B cell (primary cell): ENCODE measurements at regions of chr12 and their contacts with region 1.

Region 1: DNA sequence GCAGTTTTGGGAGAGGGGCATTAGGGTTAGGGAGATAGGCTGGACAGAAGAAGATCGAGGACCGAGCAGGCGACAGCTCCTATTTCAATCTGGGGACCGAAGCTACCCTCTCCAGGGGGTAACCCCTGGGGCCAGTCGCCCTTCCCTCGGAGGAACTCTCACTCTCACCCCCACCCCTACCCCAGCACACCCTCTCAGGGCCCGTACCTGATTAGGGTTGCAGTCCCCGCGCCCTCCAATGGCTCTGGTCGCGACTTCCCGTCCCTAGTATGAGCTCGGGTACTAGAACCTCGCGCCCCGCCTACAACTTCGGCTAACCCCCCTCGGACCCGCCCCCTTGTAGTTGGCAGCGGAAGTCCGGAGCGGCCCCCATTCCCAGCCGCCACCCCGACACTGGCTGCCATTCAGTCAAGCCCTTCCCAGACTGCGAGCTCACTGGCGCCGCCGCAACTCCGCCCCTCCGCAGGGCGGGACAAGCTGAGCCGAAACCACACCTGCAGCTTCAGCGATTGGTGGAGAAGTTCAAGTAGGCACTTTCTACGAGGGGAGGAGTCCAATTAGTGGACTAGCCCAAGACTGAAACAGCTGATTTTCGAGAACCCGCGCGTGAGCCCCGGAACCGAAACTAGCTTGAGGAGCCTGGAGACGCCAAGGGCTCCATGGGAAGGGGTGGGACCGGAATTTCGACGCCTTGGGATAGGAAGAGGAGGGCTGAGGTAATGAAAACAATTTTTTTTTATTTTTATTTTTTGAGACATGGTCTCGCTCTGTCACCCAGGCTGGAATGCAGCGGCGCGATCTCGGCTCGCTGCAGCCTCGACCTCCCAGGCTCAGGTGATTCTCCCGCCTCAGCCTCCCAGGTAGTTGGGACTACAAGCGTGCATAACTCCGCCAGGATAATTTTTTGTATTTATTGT is at the start of gene STAT2:
- DNase-seq: peak; percentile 99
- ATAC-seq: peak; percentile 93
- H3K4me3 ChIP-seq: peak within 1 kb of the TSS; percentile 55 to 97 (median 76)
- H3K4me3 Mint-ChIP-seq: peak within 1 kb of the TSS; percentile 89
- H3K27ac ChIP-seq: peak within 1 kb of the TSS; percentile 37 to 72
- H3K27ac Mint-ChIP-seq: peak within 1 kb of the TSS; percentile 92
- H3K4me1 ChIP-seq: peaks cover 15 to 24% of the 10 kb centered on the region in 2 donors
- H3K4me1 Mint-ChIP-seq: peaks cover 29% of the 10 kb centered on the region
- H3K27me3 ChIP-seq: no peaks in the 10 kb centered on the region
- H3K27me3 Mint-ChIP-seq: no peaks in the 10 kb centered on the region
- CTCF ChIP-seq: no peak
- total RNA-seq, gene STAT2: 298 and 309 TPM in 2 replicates

Region 2: DNA sequence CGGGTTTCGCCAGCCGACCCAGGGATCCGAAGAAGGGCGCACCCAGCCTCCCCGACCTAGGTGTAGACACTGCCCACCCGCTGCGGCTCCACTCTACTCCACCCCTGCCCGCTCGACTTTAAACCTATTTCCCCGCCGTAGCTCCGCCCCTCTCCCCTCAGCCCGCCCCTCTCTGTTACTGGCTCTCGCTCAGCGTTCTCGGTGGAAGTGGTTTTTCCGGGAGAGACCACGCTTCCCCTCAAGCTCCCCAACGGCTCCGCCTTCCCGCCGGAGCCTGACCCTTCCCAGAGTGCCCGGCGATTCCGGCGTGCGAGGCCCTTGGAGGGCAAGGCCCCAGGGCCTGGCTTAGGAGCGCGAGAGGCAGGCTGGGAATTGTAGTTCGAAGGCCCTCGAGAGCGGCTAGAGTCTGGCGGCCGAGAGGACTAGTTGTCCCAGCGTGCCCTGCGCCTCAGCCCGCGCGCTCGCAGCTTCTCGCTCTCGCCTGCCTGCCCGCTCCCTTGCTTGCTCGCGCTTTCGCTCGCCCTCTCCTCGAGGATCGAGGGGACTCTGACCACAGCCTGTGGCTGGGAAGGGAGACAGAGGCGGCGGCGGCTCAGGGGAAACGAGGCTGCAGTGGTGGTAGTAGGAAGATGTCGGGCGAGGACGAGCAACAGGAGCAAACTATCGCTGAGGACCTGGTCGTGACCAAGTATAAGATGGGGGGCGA is 255.8 kb before region 1 on chr12 and contains the start of gene PA2G4:
- CTCF ChIA-PET with region 1: no interaction called
- POLR2A ChIA-PET with region 1: no interaction called
- intact Hi-C with region 1: loop called (anchors 1 kb)
- DNase-seq: peak; percentile 95
- ATAC-seq: peak; percentile 89
- H3K4me3 ChIP-seq: peak within 1 kb of the TSS; percentile 56 to 93 (median 86)
- H3K4me3 Mint-ChIP-seq: peak within 1 kb of the TSS; percentile 100
- H3K27ac ChIP-seq: peak within 1 kb of the TSS; percentile 66 to 67
- H3K27ac Mint-ChIP-seq: peak within 1 kb of the TSS; percentile 92
- H3K4me1 ChIP-seq: peaks cover 18 to 23% of the 10 kb centered on the region in 2 donors
- H3K4me1 Mint-ChIP-seq: peaks cover 38% of the 10 kb centered on the region
- H3K27me3 ChIP-seq: no peaks in the 10 kb centered on the region
- H3K27me3 Mint-ChIP-seq: no peaks in the 10 kb centered on the region
- CTCF ChIP-seq: no peak
- total RNA-seq, gene PA2G4: 77.3 and 84.6 TPM in 2 replicates

Region 3: DNA sequence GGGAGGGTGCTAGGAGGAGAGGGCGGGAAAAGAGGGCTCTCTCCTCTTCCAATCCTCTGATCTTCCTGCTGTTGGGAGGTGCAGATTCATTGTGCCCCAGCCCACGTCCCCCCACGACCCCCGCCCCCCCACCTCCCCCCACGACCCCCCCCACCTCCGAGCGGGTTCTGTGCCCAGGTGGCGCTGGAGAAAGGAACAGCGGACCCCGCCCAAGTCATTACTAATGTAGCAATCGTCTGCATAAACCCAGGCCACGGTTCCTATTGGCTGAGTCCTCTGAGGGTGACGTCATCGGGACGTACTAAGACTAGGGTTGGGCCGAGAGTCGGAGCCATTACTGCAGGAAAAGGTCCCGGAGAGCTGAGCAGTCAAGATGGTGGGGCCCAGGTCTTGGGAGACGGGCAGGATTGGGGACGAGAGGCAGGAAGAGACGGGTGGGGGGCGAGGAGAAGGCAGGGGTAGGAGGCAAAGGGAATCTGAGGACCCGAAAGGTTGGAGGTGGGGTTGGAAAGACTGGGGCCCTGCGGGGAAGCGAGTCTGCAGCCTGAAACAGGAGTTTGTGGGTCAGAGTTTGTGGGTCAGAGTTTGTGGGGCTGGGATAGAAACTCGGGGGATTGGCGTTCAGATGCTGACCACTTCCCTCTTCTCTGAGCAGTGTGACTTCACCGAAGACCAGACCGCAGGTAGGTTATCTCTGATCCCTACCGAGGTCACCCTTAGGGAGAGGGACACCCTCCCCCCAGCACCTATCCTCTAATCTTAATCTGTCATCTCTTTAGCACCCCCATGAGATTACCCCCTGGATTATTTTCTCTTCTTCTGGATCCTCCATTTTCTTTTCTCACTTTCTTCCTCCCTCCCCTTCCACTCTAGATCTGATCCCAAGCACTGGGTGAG is 201.8 kb before region 1 on chr12 and contains the start of gene MYL6:
- CTCF ChIA-PET with region 1: no interaction called
- POLR2A ChIA-PET with region 1: no interaction called
- intact Hi-C with region 1: loop called (anchors 1 kb)
- DNase-seq: peak; percentile 96
- ATAC-seq: peak; percentile 87
- H3K4me3 ChIP-seq: peak within 1 kb of the TSS; percentile 80 to 97 (median 94)
- H3K4me3 Mint-ChIP-seq: peak within 1 kb of the TSS; percentile 96
- H3K27ac ChIP-seq: peak within 1 kb of the TSS; percentile 88 to 97
- H3K27ac Mint-ChIP-seq: peak within 1 kb of the TSS; percentile 97
- H3K4me1 ChIP-seq: peaks cover 20 to 40% of the 10 kb centered on the region in 2 donors
- H3K4me1 Mint-ChIP-seq: peaks cover 44% of the 10 kb centered on the region
- H3K27me3 ChIP-seq: no peaks in the 10 kb centered on the region
- H3K27me3 Mint-ChIP-seq: no peaks in the 10 kb centered on the region
- CTCF ChIP-seq: no peak
- total RNA-seq, gene MYL6: 645 and 675 TPM in 2 replicates

Region 4: GRCh38 chr12:56299853-56300643 is 60.1 kb before region 1 on chr12 and contains the start of gene CS:
- CTCF ChIA-PET with region 1: interaction called, 4 read pairs
- POLR2A ChIA-PET with region 1: no interaction called
- intact Hi-C with region 1: loop called (anchors 1 kb)
- DNase-seq: peak; percentile 98
- ATAC-seq: peak; percentile 96
- H3K4me3 ChIP-seq: peak within 1 kb of the TSS; percentile 78 to 91 (median 83)
- H3K4me3 Mint-ChIP-seq: peak within 1 kb of the TSS; percentile 98
- H3K27ac ChIP-seq: peak within 1 kb of the TSS; percentile 92 to 95
- H3K27ac Mint-ChIP-seq: peak within 1 kb of the TSS; percentile 97
- H3K4me1 ChIP-seq: peaks cover 51 to 61% of the 10 kb centered on the region in 2 donors
- H3K4me1 Mint-ChIP-seq: peaks cover 57% of the 10 kb centered on the region
- H3K27me3 ChIP-seq: no peaks in the 10 kb centered on the region
- H3K27me3 Mint-ChIP-seq: no peaks in the 10 kb centered on the region
- CTCF ChIP-seq: no peak
- total RNA-seq, gene CS: 151 and 154 TPM in 2 replicates

Region 5: GRCh38 chr12:56333679-56334489 is 26.2 kb before region 1 on chr12 and contains the start of gene PAN2:
- CTCF ChIA-PET with region 1: interaction called, 23 read pairs
- POLR2A ChIA-PET with region 1: interaction called, 24 read pairs
- intact Hi-C with region 1: loop called (anchors 1 kb)
- DNase-seq: peak; percentile 98
- ATAC-seq: peak; percentile 90
- H3K4me3 ChIP-seq: peak within 1 kb of the TSS; percentile 63 to 88 (median 80)
- H3K4me3 Mint-ChIP-seq: peak within 1 kb of the TSS; percentile 99
- H3K27ac ChIP-seq: peak within 1 kb of the TSS; percentile 94 to 100
- H3K27ac Mint-ChIP-seq: peak within 1 kb of the TSS; percentile 100
- H3K4me1 ChIP-seq: peaks cover 35 to 44% of the 10 kb centered on the region in 2 donors
- H3K4me1 Mint-ChIP-seq: peaks cover 52% of the 10 kb centered on the region
- H3K27me3 ChIP-seq: no peaks in the 10 kb centered on the region
- H3K27me3 Mint-ChIP-seq: no peaks in the 10 kb centered on the region
- CTCF ChIP-seq: peak; percentile 65
- total RNA-seq, gene PAN2: 216 and 230 TPM in 2 replicates

Region 6: GRCh38 chr12:56377310-56377988 is 17.3 kb after region 1 on chr12:
- CTCF ChIA-PET with region 1: interaction called, 14 read pairs
- POLR2A ChIA-PET with region 1: interaction called, 19 read pairs
- intact Hi-C with region 1: loop called (anchors 1 kb)
- DNase-seq: no peak
- ATAC-seq: no peak
- H3K4me3 ChIP-seq: no peak overlapping the region
- H3K4me3 Mint-ChIP-seq: peak overlapping the region; percentile 76
- H3K27ac ChIP-seq: peak overlapping the region; percentile 75 to 80
- H3K27ac Mint-ChIP-seq: peak overlapping the region; percentile 96
- H3K4me1 ChIP-seq: peaks cover 49 to 64% of the 10 kb centered on the region in 2 donors
- H3K4me1 Mint-ChIP-seq: peaks cover 47% of the 10 kb centered on the region
- H3K27me3 ChIP-seq: no peaks in the 10 kb centered on the region
- H3K27me3 Mint-ChIP-seq: no peaks in the 10 kb centered on the region
- CTCF ChIP-seq: no peak

Region 7: GRCh38 chr12:56389412-56389811 is 29.3 kb after region 1 on chr12:
- CTCF ChIA-PET with region 1: no interaction called
- POLR2A ChIA-PET with region 1: no interaction called
- intact Hi-C with region 1: no loop called
- DNase-seq: no peak
- ATAC-seq: no peak
- H3K4me3 ChIP-seq: no peak overlapping the region
- H3K4me3 Mint-ChIP-seq: no peak overlapping the region
- H3K27ac ChIP-seq: no peak overlapping the region
- H3K27ac Mint-ChIP-seq: no peak overlapping the region
- H3K4me1 ChIP-seq: no peaks in the 10 kb centered on the region
- H3K4me1 Mint-ChIP-seq: peaks cover 4% of the 10 kb centered on the region
- H3K27me3 ChIP-seq: no peaks in the 10 kb centered on the region
- H3K27me3 Mint-ChIP-seq: no peaks in the 10 kb centered on the region
- CTCF ChIP-seq: no peak

Region 8: DNA sequence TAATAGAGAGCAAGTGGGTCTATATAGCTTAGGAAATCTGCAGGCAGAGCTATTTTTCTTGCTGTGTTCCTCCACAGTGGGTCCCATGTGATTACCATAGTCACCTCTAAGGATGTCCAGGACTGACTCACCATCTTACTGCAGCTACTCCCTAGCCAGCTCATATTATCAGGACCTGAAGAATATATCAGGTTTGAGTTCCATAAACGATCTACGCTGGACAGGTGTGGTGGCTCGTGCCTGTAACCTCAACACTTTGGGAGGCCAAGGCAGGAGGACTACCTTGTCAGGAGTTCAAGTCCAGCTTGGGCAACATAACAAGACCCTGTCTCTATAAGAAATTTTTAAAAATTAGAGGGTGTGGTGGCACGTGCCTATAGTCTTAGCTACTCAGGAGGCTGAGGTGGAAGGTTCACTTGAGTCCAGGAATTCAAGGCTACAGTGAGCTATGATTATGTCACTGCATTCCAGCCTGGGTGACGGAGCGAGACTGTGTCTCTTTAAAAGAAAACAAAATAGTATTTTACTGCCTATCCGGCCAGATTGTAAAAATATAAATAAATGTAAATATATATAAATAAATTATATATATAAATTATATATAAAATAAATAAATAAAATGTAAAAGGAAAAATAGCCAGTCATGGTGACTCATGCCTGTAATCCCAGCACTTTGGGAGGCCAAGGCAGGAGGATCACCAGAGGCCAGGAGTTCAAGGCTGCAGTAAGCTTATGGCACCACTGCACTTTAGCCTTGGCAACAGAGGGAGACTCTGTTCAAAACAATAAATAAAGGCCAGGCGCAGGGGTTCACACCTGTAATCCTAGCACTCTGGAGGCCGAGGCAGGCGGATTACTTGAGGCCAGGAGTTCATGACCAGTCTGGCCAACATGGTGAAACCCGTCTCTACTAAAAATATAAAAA is 101.4 kb after region 1 on chr12:
- CTCF ChIA-PET with region 1: interaction called, 59 read pairs
- POLR2A ChIA-PET with region 1: interaction called, 22 read pairs
- intact Hi-C with region 1: loop called (anchors 1 kb)
- DNase-seq: no peak
- ATAC-seq: no peak
- H3K4me3 ChIP-seq: no peak overlapping the region
- H3K4me3 Mint-ChIP-seq: no peak overlapping the region
- H3K27ac ChIP-seq: peak overlapping the region; percentile 40 to 70
- H3K27ac Mint-ChIP-seq: peak overlapping the region; percentile 91
- H3K4me1 ChIP-seq: peaks cover 13 to 24% of the 10 kb centered on the region in 2 donors
- H3K4me1 Mint-ChIP-seq: peaks cover 23% of the 10 kb centered on the region
- H3K27me3 ChIP-seq: no peaks in the 10 kb centered on the region
- H3K27me3 Mint-ChIP-seq: no peaks in the 10 kb centered on the region
- CTCF ChIP-seq: no peak